ENCODE measurements at regions of chr1 and their contacts with region 1.

Region 1: DNA sequence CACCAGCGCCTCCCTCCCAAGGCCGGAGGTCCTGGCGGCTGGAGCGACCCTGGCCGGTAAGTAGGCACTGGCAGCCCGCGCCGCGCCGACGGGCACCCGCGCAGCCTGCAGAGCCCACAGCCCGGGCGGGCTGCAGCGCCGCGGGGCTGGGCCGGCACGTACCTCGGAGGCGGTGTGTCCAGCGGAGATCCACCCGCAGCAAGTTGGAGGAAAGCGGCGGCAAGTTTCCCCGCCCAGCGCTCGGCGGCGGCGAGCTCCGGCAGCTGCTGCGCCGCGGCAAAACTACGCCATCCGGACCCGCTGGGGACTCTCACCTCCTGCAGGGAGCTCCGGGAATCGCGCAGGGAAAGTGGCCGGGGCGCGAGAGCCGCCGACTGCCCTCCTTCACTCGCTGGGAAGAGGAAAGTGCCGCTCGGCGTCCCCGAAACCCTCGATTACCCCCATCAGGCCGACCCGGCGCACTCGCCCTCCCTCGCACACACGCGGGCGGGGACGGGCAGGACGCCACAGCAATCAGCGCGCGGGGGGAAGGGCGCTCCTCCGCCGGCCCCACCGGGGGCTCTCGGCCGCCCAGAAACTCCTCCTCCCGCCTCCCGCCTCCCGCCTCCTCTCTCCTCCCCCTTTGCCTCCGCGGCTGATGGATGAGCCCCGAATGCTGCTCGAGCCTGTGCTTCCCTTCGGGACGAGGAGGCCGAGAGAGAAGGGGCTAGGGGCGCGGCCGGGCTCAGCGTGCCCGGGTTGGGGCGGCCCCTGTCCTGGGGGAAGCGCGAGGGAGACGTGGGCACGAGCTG is at the start of gene TGFBR3:
- DNase-seq: peak; percentile 93 to 97
- ATAC-seq: peak; percentile 90 to 96 (median 94)
- H3K4me3 ChIP-seq: peak within 1 kb of the TSS; percentile 77
- H3K27ac ChIP-seq: peak within 1 kb of the TSS; percentile 84
- H3K4me1 ChIP-seq: peaks cover 20% of the 10 kb centered on the region
- H3K27me3 ChIP-seq: no peaks in the 10 kb centered on the region
- CTCF ChIP-seq: peak; percentile 55
- total RNA-seq, gene TGFBR3: 5.8 to 24.5 (median 18.9) TPM

Region 2: DNA sequence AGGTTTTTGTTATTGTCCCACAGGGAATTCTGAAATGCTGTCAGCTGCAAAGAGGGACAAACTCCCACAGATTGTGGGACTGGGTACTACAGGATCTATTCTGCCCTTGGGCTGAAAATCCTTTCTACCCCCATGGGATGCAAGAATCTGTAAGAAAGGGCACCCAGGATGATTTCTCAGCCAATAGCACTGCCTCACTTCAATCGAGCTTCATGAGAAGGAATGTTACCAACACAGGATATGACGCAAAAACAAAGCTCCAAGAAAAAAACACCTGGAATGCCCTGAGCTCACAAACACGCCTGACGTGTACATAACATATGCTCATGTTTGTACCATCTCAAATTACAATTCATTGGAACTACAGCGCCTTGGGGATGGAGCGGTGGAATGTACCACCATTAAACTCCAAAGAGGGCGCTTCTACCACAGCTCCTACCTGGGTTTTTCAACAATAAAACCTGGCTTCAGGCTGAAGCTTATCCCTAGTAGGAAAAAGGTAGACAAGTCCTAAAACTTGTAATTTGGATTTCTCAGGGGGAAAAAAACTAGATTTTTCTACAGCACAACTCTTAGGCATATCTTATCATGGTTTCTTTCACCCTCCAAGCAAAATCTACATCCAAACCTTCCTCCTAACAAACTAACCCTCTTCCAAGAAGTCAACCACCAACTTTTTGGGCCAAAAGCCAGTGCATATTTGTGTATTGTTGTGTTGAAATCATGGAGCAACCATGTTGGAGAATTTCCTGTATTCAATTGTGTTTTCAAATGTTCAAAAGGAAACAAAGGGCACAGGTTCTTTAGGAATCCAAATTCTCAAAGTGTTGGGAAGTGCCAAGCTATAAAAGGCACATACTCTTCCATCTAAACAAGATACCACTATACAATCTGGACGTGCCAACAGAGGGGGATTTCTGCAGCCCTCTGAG is 78.9 kb before region 1 on chr1:
- intact Hi-C with region 1: no loop called
- DNase-seq: no peak
- ATAC-seq: no peak
- H3K4me3 ChIP-seq: no peak overlapping the region
- H3K27ac ChIP-seq: no peak overlapping the region
- H3K4me1 ChIP-seq: peaks cover 35% of the 10 kb centered on the region
- H3K27me3 ChIP-seq: no peaks in the 10 kb centered on the region
- CTCF ChIP-seq: no peak

Region 3: DNA sequence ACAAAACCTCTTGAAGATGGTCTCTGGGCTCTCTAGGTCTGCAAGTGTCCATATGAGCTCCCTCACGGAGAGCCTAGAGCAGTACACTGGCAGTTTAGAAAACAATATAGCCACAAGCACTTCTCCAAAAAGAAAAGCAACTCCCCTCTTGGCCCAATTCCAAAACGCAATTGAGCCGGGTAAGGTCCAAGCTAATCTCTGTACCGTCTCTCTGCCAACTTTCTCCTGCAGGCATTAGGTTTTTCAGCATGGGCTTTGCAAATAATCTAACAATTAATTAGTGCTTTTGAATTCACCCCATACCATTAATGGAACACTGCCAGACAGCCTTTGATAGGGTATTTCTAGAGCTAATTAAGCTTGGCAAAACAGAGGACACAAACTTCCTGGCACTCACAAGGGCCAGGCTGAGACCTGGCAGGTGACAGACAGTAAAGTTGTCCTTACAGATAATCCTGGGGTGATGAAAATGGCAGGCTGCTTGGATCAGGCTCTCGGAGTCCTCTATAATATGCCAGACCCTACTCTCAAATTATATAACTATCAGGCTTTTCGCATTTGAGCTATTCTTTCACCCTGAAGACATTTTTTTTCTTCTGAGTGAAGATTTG is 39.8 kb before region 1 on chr1:
- intact Hi-C with region 1: loop called in 1 of 2 experiments (anchors 5 kb)
- DNase-seq: no peak
- ATAC-seq: peak; percentile 41 to 71 (median 60)
- H3K4me3 ChIP-seq: peak overlapping the region; percentile 36
- H3K27ac ChIP-seq: peak overlapping the region; percentile 68
- H3K4me1 ChIP-seq: peaks cover 33% of the 10 kb centered on the region
- H3K27me3 ChIP-seq: no peaks in the 10 kb centered on the region
- CTCF ChIP-seq: no peak